ENCODE measurements at regions of chrX and their contacts with region 1.

Region 1: DNA sequence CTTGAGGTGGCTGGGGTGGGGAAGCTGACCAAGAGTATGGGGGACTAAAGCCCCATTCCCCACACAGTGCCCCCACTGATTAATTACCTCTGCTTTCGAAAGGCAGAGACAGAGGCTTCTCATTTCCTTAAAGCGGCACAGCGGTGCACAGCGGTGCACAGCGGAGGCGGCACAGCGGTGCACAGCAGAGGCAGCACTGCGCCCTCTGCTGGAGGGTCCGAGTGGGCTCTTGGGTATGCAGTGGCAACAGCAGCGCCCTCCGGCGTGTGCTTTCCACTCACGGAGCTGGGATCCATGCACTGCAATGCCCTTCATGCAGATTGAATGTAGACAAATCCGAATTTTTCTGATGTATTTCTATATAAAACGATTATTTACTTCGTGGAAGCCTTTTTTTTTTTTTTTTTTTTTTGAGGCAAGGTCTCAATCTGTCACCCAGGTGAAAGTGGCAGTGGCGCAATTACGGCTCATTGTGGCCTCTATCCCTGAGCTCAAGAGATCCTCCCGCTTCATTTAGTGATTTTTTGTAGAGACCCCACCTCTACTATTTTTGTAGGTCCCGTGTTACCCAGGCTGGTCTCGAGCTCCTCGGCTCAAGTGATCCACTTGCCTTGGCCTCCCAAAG is 19.7 kb upstream of the PRPS2 start:
- DNase-seq: peak; percentile 79
- ATAC-seq: peak; percentile 100
- H3K4me3 Mint-ChIP-seq: no peak overlapping the region
- H3K27ac Mint-ChIP-seq: no peak overlapping the region
- H3K4me1 Mint-ChIP-seq: peaks cover 4% of the 10 kb centered on the region
- H3K27me3 Mint-ChIP-seq: peaks cover 31% of the 10 kb centered on the region

Region 2: DNA sequence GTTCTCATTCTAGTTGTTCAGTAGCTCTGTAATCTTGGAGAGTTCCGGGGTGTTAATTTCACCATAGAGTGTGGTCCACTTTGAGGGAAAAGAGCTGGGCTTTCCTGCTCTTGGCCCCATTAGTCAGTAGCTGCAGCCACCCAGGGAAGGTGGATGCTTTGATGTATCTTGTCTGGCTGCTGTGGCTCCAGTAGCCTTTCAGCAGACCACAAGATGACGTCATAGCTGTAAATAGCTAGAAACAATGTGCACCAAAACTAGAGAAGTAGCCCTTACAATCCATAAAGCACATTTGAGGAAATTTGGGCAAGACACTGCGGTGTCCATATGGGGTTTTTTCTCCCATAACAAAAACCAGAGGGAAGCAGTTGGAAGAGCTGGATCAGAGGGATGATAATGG is 13.3 kb before region 1 on chrX:
- CTCF ChIA-PET with region 1: interaction called, 26 read pairs
- DNase-seq: no peak
- ATAC-seq: no peak
- H3K4me3 Mint-ChIP-seq: no peak overlapping the region
- H3K27ac Mint-ChIP-seq: no peak overlapping the region
- H3K4me1 Mint-ChIP-seq: peaks cover 1% of the 10 kb centered on the region
- H3K27me3 Mint-ChIP-seq: peaks cover 6% of the 10 kb centered on the region

Region 3: DNA sequence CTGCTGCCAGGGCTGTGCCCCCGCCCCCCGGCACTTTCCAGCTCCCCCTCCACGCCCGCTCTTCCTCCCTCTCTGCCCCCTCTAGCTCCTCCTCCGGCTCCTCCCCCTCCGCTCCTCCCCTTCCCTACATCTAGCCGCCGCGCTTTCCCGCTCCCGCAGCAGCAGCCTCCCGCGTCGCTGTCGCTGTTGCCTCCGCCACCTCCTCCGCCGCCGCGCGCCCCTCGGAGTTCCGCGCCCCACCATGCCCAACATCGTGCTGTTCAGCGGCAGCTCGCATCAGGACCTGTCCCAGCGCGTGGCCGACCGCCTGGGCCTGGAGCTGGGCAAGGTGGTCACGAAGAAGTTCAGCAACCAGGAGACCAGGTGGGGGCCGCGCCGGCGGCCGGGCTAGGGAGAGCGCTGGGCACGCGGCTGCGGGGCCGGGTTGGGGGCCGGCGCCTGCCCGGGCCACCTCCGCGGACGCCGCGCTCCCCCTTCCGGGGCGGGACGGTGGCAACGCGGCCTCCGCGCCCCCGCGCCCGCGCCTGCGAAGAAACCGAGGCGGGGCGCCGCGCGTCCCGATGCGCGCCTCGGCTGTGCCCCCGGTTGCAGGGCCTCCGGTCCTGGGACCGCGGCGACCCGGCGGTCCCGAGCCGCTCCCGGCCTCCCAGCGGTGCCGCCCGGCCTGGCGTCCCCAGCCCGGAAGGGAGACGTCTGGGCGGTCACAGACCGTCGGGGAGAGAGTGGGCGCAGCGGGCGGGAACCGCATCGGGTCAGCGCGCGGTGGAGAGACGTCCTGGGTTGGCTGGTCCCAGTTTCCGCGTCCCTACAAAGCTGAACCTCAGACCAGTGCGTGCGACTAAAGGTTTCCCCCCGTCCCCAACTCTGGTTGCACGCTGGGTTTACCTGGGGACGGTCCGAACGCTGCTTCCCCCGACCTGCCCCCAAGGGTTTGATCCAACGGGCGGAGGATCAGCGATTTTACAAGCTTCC is 20.0 kb after region 1 on chrX and contains the start of gene PRPS2:
- CTCF ChIA-PET with region 1: interaction called, 33 read pairs
- DNase-seq: peak; percentile 82
- ATAC-seq: peak; percentile 93
- H3K4me3 Mint-ChIP-seq: peak within 1 kb of the TSS; percentile 82
- H3K27ac Mint-ChIP-seq: peak within 1 kb of the TSS; percentile 76
- H3K4me1 Mint-ChIP-seq: peaks cover 35% of the 10 kb centered on the region
- H3K27me3 Mint-ChIP-seq: peaks cover 10% of the 10 kb centered on the region
- total RNA-seq, gene PRPS2: 72.8 to 77.8 TPM

Region 4: DNA sequence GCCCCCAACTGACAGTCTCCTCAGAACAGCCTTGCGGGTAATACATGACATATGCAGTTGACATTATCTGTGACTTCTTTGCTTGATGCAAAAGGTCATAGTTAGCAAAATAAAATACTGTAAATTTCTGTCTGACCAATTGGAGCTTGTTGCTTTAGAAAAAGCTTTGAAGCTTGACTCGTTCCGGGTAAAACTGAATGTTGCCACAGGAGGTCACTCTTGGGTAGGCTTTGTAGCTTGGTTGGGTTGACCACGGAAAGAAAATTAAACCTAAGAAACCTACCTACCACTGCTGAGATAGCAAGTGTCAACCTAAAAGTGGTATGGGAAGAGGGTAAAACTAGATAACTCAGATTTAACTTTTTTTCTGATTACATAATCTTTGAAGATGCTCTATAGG is 42.9 kb after region 1 on chrX:
- CTCF ChIA-PET with region 1: interaction called, 11 read pairs
- DNase-seq: peak; percentile 66
- ATAC-seq: peak; percentile 64
- H3K4me3 Mint-ChIP-seq: no peak overlapping the region
- H3K27ac Mint-ChIP-seq: no peak overlapping the region
- H3K4me1 Mint-ChIP-seq: peaks cover 21% of the 10 kb centered on the region
- H3K27me3 Mint-ChIP-seq: no peaks in the 10 kb centered on the region

Region 5: DNA sequence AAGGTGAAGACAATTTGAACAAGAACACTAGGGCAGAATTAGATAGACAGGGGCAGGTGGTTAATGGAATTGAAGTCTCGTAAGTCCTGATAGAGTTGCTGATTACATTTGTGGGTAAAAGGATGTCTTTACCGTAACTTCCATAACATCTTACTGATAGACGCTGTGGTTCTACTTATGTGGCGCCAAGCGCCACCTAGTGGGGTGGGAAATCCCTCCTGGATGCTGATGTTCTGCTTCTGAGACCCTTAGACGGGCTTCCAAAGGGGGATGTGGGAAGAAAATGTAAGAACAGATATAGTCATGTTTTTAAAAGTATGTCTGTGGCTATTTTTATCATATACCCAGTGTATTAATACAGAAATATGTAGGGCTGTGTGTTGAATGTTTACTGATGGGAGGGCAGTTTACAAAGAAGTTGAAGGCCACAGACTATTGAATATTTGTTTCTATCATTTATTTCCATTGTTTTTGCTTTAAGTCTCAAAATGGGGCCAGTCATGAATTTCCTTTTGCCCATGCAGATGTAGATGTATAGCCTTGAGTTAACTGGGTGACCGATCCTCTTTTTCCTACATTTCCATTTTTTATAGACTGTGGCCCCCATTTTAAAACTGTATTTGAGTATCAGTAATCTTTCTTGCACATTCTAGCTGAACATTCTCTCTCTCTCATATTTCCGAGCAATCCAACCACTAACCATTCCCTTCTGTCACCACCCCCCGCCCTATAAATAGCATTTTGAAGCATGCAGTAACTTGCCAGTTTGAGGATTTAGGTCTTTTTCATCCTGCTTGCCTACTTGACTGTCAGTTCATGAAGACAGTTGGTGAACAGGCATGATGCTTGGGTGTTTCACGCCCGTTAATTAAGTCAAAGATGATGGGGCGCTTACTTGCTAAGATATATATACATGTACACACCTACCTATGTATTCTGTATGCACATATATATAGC is 122.8 kb after region 1 on chrX:
- CTCF ChIA-PET with region 1: interaction called, 10 read pairs
- DNase-seq: peak; percentile 60
- ATAC-seq: peak; percentile 84
- H3K4me3 Mint-ChIP-seq: no peak overlapping the region
- H3K27ac Mint-ChIP-seq: no peak overlapping the region
- H3K4me1 Mint-ChIP-seq: peaks cover 35% of the 10 kb centered on the region
- H3K27me3 Mint-ChIP-seq: no peaks in the 10 kb centered on the region